Vagina (tissue), 2 donors: ENCODE measurements at regions of chr20 and their contacts with region 1.

Region 1: DNA sequence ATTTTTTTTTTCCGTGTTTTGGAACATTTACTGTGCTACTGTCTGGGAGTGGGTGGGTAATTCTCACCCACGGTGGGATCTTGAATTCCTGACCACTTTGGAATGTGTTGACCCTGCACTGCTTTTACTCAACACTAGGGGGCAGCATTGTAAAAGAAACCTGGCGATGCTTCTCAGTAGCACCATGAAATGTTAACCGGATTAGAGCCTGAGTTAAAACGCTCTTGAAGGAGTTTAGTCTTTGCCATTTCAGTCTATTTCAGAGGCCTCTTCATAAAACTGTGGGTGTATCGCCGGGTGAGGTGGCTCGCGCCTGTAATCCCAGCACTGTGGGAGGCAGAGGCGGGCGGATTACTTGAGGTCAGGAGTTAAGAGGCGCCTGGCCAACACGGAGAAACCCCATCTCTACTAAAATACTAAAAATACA is 114.4 kb upstream of the PRND start:
- DNase-seq: peak in 1 of 2 donors; percentile 25
- H3K4me3 ChIP-seq: no peak overlapping the region
- H3K27ac ChIP-seq: peak overlapping the region; percentile 44
- H3K4me1 ChIP-seq: no peaks in the 10 kb centered on the region
- H3K27me3 ChIP-seq: no peaks in the 10 kb centered on the region
- CTCF ChIP-seq: peak; percentile 94 to 98 (median 97)
- POLR2A ChIP-seq: no peak

Region 2: GRCh38 chr20:4720041-4720976 is 113.0 kb after region 1 on chr20:
- intact Hi-C with region 1: loop called (anchors 2 kb)
- DNase-seq: no peak
- H3K4me3 ChIP-seq: no peak overlapping the region
- H3K27ac ChIP-seq: peak overlapping the region; percentile 74
- H3K4me1 ChIP-seq: peaks cover 9% of the 10 kb centered on the region
- H3K27me3 ChIP-seq: no peaks in the 10 kb centered on the region
- CTCF ChIP-seq: peak; percentile 58 to 85 (median 70)
- POLR2A ChIP-seq: no peak